B cell (primary cell): ENCODE measurements at regions of chr7 and their contacts with region 1.

Region 1: GRCh38 chr7:116173051-116174028 is 37.0 kb upstream of the TES start:
- DNase-seq: peak; percentile 74
- ATAC-seq: peak; percentile 61
- H3K4me3 ChIP-seq: no peak overlapping the region
- H3K4me3 Mint-ChIP-seq: no peak overlapping the region
- H3K27ac ChIP-seq: no peak overlapping the region
- H3K27ac Mint-ChIP-seq: no peak overlapping the region
- H3K4me1 ChIP-seq: no peaks in the 10 kb centered on the region
- H3K4me1 Mint-ChIP-seq: peaks cover 2% of the 10 kb centered on the region
- H3K27me3 ChIP-seq: no peaks in the 10 kb centered on the region
- H3K27me3 Mint-ChIP-seq: no peaks in the 10 kb centered on the region
- CTCF ChIP-seq: peak; percentile 82

Region 2: DNA sequence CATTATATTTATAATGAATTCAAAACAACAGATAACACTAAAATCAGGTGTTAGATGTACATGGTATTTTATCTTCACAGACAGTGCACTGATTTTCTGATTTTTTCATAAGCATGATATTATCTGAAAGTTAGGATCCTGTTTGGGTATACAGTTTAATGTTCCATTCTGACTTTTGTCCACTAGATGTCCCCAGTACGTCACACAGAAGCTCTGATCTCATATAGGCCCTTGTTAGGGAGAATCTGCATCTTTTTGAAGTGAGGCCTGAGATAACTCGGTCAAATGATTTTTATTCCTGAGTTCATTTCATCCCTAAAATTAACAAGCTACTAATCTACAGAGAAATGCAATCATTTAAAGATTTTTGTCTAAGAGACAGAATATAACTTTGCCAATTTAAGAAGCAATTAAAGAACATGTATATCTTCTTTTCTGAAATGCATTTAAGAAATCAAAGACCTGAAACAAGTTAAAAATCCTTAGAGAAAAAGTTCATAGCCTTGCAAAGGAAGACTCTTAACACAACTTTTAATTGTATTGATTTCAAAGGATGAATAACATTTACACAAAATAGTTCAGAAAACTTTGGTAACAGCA is 35.0 kb before region 1 on chr7:
- CTCF ChIA-PET with region 1: interaction called, 40 read pairs
- POLR2A ChIA-PET with region 1: no interaction called
- intact Hi-C with region 1: loop called (anchors 1 kb)
- DNase-seq: peak; percentile 74
- ATAC-seq: peak; percentile 85
- H3K4me3 ChIP-seq: no peak overlapping the region
- H3K4me3 Mint-ChIP-seq: no peak overlapping the region
- H3K27ac ChIP-seq: no peak overlapping the region
- H3K27ac Mint-ChIP-seq: no peak overlapping the region
- H3K4me1 ChIP-seq: peaks cover 6 to 7% of the 10 kb centered on the region in 2 donors
- H3K4me1 Mint-ChIP-seq: peaks cover 23% of the 10 kb centered on the region
- H3K27me3 ChIP-seq: no peaks in the 10 kb centered on the region
- H3K27me3 Mint-ChIP-seq: no peaks in the 10 kb centered on the region
- CTCF ChIP-seq: peak; percentile 89

Region 3: GRCh38 chr7:116242178-116242577 is 68.8 kb after region 1 on chr7:
- CTCF ChIA-PET with region 1: interaction called, 497 read pairs
- POLR2A ChIA-PET with region 1: no interaction called
- intact Hi-C with region 1: no loop called
- DNase-seq: no peak
- ATAC-seq: no peak
- H3K4me3 ChIP-seq: no peak overlapping the region
- H3K4me3 Mint-ChIP-seq: no peak overlapping the region
- H3K27ac ChIP-seq: no peak overlapping the region
- H3K27ac Mint-ChIP-seq: no peak overlapping the region
- H3K4me1 ChIP-seq: no peaks in the 10 kb centered on the region
- H3K4me1 Mint-ChIP-seq: peaks cover 15% of the 10 kb centered on the region
- H3K27me3 ChIP-seq: no peaks in the 10 kb centered on the region
- H3K27me3 Mint-ChIP-seq: no peaks in the 10 kb centered on the region
- CTCF ChIP-seq: no peak

Region 4: GRCh38 chr7:117127585-117128168 is 954.3 kb after region 1 on chr7:
- CTCF ChIA-PET with region 1: interaction called, 6 read pairs
- POLR2A ChIA-PET with region 1: no interaction called
- intact Hi-C with region 1: loop called (anchors 5 kb)
- DNase-seq: peak; percentile 55
- ATAC-seq: no peak
- H3K4me3 ChIP-seq: no peak overlapping the region
- H3K4me3 Mint-ChIP-seq: no peak overlapping the region
- H3K27ac ChIP-seq: no peak overlapping the region
- H3K27ac Mint-ChIP-seq: no peak overlapping the region
- H3K4me1 ChIP-seq: no peaks in the 10 kb centered on the region
- H3K4me1 Mint-ChIP-seq: no peaks in the 10 kb centered on the region
- H3K27me3 ChIP-seq: no peaks in the 10 kb centered on the region
- H3K27me3 Mint-ChIP-seq: no peaks in the 10 kb centered on the region
- CTCF ChIP-seq: peak; percentile 93